ENCODE measurements at regions of chr20 and their contacts with region 1.

Region 1: GRCh38 chr20:3820048-3820900 is at the start of gene AP5S1:
- DNase-seq: peak; percentile 99
- ATAC-seq: peak; percentile 94
- H3K4me3 ChIP-seq: peak within 1 kb of the TSS; percentile 75
- H3K27ac ChIP-seq: peak within 1 kb of the TSS; percentile 99
- H3K4me1 ChIP-seq: peaks cover 18% of the 10 kb centered on the region
- H3K27me3 ChIP-seq: no peaks in the 10 kb centered on the region
- CTCF ChIP-seq: peak; percentile 98
- total RNA-seq, gene AP5S1: 13.1 TPM

Region 2: DNA sequence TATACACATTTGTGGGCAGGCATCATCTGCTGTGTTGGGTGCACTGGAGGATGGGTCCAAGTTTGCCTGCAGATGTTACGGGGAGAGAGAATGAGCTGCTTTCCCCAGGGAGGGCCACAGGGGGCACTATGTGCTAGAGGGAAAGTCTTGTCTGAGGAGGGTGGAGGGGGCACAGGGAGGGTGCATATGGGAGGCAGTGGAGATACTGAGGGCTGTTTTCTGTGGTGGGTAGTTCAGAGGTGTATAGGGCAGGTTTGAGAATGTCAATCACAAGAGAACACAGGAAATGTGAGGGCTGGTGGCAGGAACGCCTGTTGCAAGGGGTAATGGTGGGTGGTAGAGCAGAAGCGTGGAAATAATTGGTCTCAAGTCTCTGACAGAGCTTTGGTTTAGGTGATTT is 954.6 kb before region 1 on chr20:
- intact Hi-C with region 1: no loop called
- DNase-seq: no peak
- ATAC-seq: no peak
- H3K4me3 ChIP-seq: no peak overlapping the region
- H3K27ac ChIP-seq: no peak overlapping the region
- H3K4me1 ChIP-seq: no peaks in the 10 kb centered on the region
- H3K27me3 ChIP-seq: no peaks in the 10 kb centered on the region
- CTCF ChIP-seq: no peak

Region 3: GRCh38 chr20:3786665-3787323 is 33.5 kb before region 1 on chr20 and contains the start of gene CENPB:
- intact Hi-C with region 1: loop called (anchors 5 kb)
- DNase-seq: peak; percentile 95
- ATAC-seq: peak; percentile 97
- H3K4me3 ChIP-seq: peak within 1 kb of the TSS; percentile 73
- H3K27ac ChIP-seq: peak within 1 kb of the TSS; percentile 84
- H3K4me1 ChIP-seq: peaks cover 23% of the 10 kb centered on the region
- H3K27me3 ChIP-seq: no peaks in the 10 kb centered on the region
- CTCF ChIP-seq: peak; percentile 80
- total RNA-seq, gene CENPB: 94.6 TPM

Region 4: DNA sequence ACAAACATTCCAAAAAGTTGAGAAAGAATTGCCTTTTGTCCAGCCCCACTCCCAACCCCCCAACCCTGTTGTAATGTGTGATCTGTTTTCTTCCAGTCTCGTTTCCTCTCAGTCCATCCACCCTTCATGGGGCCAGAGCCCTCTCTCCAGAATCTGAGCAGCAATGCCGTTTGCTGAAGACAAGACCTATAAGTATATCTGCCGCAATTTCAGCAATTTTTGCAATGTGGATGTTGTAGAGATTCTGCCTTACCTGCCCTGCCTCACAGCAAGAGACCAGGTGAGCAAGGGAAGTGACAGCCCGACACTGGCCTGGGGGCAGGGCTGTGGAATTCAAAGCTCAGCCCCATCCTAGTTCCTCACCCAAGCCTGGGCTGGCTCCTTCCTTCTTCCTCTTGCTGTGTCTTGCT is 34.2 kb after region 1 on chr20:
- intact Hi-C with region 1: no loop called
- DNase-seq: no peak
- ATAC-seq: peak; percentile 51
- H3K4me3 ChIP-seq: no peak overlapping the region
- H3K27ac ChIP-seq: no peak overlapping the region
- H3K4me1 ChIP-seq: no peaks in the 10 kb centered on the region
- H3K27me3 ChIP-seq: no peaks in the 10 kb centered on the region
- CTCF ChIP-seq: no peak

Measured in upper lobe of right lung (tissue), 1 donor.